Mammary epithelial cell (primary cell): ENCODE measurements at regions of chr17 and their contacts with region 1.

Region 1: DNA sequence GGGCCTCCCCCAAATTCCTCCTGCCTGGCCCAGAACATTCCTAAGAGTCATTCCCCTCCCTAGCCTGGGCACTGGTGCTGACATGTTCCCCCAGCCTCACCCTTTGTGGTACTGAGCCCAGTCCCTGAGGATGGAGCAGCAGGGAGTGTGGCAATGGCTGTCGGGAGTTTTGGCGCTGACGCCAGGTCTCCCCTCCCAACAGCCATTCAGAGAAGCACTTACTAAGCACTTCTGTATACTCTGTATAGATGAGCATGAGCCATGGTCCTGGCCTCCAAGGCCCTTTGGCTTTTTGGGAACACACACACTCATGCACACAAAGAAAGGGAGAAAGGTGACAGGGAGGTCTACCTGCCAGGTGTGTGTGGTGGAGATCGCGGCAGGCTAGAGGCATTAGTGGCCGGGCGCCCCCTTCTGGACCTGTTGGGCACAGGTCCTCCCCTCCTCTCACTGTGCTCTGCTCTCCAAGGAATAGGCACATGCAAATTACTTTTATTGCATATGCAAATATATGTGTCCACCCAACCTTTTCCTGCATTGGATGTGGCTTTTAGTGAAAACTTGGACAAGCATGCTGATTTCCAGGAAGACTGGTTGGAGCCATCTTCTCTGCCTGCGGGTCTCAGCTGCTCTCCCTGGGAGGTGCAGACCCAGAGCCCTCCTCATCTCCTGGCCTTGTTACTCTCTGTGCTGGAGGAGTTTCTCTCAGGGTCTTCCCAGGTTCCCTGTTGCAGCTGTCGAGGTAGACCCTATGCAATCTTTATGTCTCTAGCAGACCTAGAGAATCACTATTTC is 17.4 kb upstream of the C17orf107 start:
- DNase-seq: peak; percentile 63
- H3K4me3 ChIP-seq: no peak overlapping the region
- H3K27ac ChIP-seq: no peak overlapping the region
- H3K4me1 ChIP-seq: peaks cover 5% of the 10 kb centered on the region
- H3K27me3 ChIP-seq: no peaks in the 10 kb centered on the region
- CTCF ChIP-seq: peak; percentile 88 to 91

Region 2: GRCh38 chr17:4554997-4555799 is 326.8 kb before region 1 on chr17 and contains the start of gene MYBBP1A:
- CTCF ChIA-PET with region 1: no interaction called
- dilution Hi-C with region 1: no loop called
- in situ Hi-C with region 1: loop called in 1 of 2 experiments (anchors 25 kb)
- intact Hi-C with region 1: no loop called
- DNase-seq: peak; percentile 92
- H3K4me3 ChIP-seq: peak within 1 kb of the TSS; percentile 78 to 100 (median 91)
- H3K27ac ChIP-seq: peak within 1 kb of the TSS; percentile 67
- H3K4me1 ChIP-seq: peaks cover 48% of the 10 kb centered on the region
- H3K27me3 ChIP-seq: no peaks in the 10 kb centered on the region
- CTCF ChIP-seq: no peak
- total RNA-seq, gene MYBBP1A: 63.2 to 105 TPM

Region 3: DNA sequence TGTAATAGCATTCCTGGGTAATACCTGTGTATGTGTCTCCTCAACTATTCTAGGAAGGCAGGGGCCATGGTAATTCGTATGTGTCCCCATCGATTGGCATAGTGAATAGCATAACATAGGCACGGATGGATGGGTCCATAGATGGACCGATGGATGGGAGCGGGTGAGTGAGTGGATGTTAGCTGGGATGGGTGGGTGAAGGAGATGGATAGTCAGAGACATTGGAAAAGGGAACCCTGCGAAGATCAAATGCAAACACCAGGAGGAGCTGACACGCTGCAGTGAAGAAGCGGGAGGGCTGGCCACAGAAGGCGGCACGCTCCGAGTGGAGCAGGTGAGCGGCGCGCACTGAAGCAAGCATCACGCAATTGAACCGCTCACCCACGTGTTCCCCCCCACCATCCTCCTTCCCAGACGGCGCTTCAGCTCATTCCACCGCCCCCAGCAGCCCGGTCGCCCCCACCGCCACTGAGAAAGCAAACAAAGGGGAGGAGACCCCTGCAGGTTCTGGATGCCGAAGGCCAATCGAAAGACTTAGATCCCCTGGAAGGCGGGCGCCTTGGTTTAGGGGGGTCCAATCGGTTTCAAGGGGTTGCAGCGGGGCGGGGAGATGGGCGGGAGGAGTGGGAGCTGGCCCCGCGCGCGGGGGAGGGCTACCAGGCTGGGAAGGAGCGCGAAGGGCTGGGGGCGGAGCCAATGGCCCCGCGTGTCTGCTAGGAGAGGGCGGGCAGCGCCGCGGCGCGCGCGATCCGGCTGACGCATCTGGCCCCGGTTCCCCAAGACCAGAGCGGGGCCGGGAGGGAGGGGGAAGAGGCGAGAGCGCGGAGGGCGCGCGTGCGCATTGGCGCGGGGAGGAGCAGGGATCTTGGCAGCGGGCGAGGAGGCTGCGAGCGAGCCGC is 171.9 kb before region 1 on chr17 and contains the start of gene ARRB2:
- CTCF ChIA-PET with region 1: no interaction called
- dilution Hi-C with region 1: no loop called
- in situ Hi-C with region 1: no loop called
- intact Hi-C with region 1: loop called (anchors 1 kb)
- DNase-seq: peak; percentile 98
- H3K4me3 ChIP-seq: peak within 1 kb of the TSS; percentile 50 to 63 (median 63)
- H3K27ac ChIP-seq: peak within 1 kb of the TSS; percentile 14
- H3K4me1 ChIP-seq: peaks cover 14% of the 10 kb centered on the region
- H3K27me3 ChIP-seq: no peaks in the 10 kb centered on the region
- CTCF ChIP-seq: peak; percentile 35 to 72
- total RNA-seq, gene ARRB2: 3.5 to 14.4 TPM

Region 4: DNA sequence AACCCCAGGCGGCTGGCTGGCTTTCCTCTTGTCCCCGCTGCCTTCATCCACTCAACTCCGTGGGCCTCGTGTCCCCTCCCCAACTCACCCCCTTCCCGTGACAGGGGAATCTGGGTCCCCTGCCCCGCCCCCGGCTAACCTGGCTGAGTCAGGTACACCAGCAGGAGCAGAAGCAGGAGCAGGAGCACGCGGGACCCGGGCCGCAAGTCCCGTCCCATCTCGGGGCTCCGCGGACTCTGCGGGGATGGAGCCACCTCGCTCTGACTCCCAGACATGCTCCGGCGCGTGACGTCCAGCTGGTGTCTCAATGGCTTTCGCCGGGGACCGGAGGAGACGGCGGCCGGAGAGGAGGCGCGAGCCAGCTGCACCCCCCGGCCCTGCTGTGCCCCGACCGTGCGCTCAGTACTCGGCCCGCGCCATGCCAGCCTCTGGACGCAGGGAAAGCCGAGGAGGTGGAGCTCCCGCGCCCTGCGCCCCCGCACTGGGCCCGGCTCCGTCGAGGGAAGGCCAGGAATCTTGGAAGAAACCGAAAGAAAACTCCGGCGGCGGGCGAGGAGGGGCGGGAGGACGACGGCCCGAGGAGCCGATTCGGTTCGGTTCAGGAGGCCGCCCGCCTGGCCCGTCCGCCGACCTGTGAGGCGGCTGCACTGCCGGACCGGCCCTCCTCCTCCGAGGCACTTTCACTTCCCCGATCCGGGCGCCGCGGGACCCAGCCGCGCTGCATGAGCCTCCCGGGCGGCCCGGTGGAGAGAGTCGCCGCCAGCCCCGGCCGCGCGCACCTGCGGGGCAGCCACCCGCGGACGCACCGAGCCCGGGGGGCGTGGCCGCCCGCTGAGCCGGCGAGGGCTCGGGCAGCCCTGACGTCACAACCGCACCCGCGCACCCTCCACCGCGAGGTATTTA is 142.6 kb before region 1 on chr17 and contains the starts of genes CXCL16 and ZMYND15:
- CTCF ChIA-PET with region 1: no interaction called
- dilution Hi-C with region 1: no loop called
- in situ Hi-C with region 1: loop called (anchors 10 kb)
- intact Hi-C with region 1: no loop called
- DNase-seq: peak; percentile 52
- H3K4me3 ChIP-seq: peak within 1 kb of the TSS; percentile 54 to 74 (median 69)
- H3K27ac ChIP-seq: peak within 1 kb of the TSS; percentile 56
- H3K4me1 ChIP-seq: peaks cover 18% of the 10 kb centered on the region
- H3K27me3 ChIP-seq: no peaks in the 10 kb centered on the region
- CTCF ChIP-seq: no peak
- total RNA-seq, gene CXCL16: 12.7 to 20.2 TPM
- total RNA-seq, gene ZMYND15: 0.33 to 0.52 TPM

Region 5: GRCh38 chr17:4806777-4807604 is 75.0 kb before region 1 on chr17 and contains the start of gene PLD2:
- CTCF ChIA-PET with region 1: no interaction called
- dilution Hi-C with region 1: no loop called
- in situ Hi-C with region 1: no loop called
- intact Hi-C with region 1: loop called (anchors 1 kb)
- DNase-seq: peak; percentile 79
- H3K4me3 ChIP-seq: peak within 1 kb of the TSS; percentile 75 to 94 (median 83)
- H3K27ac ChIP-seq: peak within 1 kb of the TSS; percentile 22
- H3K4me1 ChIP-seq: peaks cover 15% of the 10 kb centered on the region
- H3K27me3 ChIP-seq: no peaks in the 10 kb centered on the region
- CTCF ChIP-seq: no peak
- total RNA-seq, gene PLD2: 22.2 to 42.9 TPM